ENCODE measurements at regions of chr3 and their contacts with region 1.

Region 1: GRCh38 chr3:24680214-24680967 is 185.7 kb upstream of the THRB start:
- DNase-seq: peak; percentile 51
- H3K4me3 ChIP-seq: no peak overlapping the region
- H3K27ac ChIP-seq: no peak overlapping the region
- H3K27me3 ChIP-seq: no peaks in the 10 kb centered on the region
- CTCF ChIP-seq: peak; percentile 98

Region 2: GRCh38 chr3:24264748-24265158 is 415.6 kb before region 1 on chr3:
- in situ Hi-C with region 1: loop called (anchors 25 kb)
- DNase-seq: peak; percentile 20
- H3K4me3 ChIP-seq: no peak overlapping the region
- H3K27ac ChIP-seq: no peak overlapping the region
- H3K27me3 ChIP-seq: no peaks in the 10 kb centered on the region
- CTCF ChIP-seq: peak; percentile 82

Region 3: DNA sequence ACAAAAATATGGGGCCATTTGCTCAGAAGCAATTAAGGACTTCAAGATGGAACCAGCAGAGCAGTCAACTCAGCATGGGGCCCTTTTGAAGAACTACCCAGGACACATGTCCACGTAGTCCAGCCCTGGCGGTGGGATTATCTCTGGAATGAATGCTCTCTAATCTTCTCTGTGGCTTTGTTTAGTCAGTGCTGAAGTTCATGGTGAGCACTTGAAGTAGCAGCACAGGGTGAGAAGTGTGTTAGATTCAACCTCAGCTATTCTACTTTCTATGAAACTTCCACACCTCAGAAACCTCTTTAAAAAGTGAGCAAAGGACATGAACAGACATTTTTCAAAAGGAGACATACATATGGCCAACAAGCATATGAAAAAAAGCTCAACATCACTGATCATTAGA is 260.2 kb before region 1 on chr3:
- in situ Hi-C with region 1: no loop called
- DNase-seq: no peak
- H3K4me3 ChIP-seq: no peak overlapping the region
- H3K27ac ChIP-seq: no peak overlapping the region
- H3K27me3 ChIP-seq: no peaks in the 10 kb centered on the region
- CTCF ChIP-seq: no peak

Region 4: GRCh38 chr3:24545913-24546312 is 134.5 kb before region 1 on chr3:
- in situ Hi-C with region 1: no loop called
- DNase-seq: no peak
- H3K4me3 ChIP-seq: no peak overlapping the region
- H3K27ac ChIP-seq: no peak overlapping the region
- H3K27me3 ChIP-seq: no peaks in the 10 kb centered on the region
- CTCF ChIP-seq: no peak